Psoas muscle (tissue), 8 donors: ENCODE measurements at regions of chr2 and their contacts with region 1.

Region 1: GRCh38 chr2:61538200-61538919 is at the start of gene XPO1:
- DNase-seq: peak; percentile 99 to 100
- ATAC-seq: peak; percentile 90 to 94 (median 90)
- H3K4me3 ChIP-seq: peak within 1 kb of the TSS; percentile 87
- H3K27ac ChIP-seq: peak within 1 kb of the TSS; percentile 97
- H3K4me1 ChIP-seq: peaks cover 24% of the 10 kb centered on the region
- H3K27me3 ChIP-seq: no peaks in the 10 kb centered on the region
- CTCF ChIP-seq: no peak
- total RNA-seq, gene XPO1: 57.9 to 108 (median 63.1) TPM

Region 2: GRCh38 chr2:61343141-61343540 is 195.2 kb before region 1 on chr2:
- intact Hi-C with region 1: no loop called
- DNase-seq: no peak
- ATAC-seq: no peak
- H3K4me3 ChIP-seq: no peak overlapping the region
- H3K27ac ChIP-seq: no peak overlapping the region
- H3K4me1 ChIP-seq: no peaks in the 10 kb centered on the region
- H3K27me3 ChIP-seq: no peaks in the 10 kb centered on the region
- CTCF ChIP-seq: no peak

Region 3: DNA sequence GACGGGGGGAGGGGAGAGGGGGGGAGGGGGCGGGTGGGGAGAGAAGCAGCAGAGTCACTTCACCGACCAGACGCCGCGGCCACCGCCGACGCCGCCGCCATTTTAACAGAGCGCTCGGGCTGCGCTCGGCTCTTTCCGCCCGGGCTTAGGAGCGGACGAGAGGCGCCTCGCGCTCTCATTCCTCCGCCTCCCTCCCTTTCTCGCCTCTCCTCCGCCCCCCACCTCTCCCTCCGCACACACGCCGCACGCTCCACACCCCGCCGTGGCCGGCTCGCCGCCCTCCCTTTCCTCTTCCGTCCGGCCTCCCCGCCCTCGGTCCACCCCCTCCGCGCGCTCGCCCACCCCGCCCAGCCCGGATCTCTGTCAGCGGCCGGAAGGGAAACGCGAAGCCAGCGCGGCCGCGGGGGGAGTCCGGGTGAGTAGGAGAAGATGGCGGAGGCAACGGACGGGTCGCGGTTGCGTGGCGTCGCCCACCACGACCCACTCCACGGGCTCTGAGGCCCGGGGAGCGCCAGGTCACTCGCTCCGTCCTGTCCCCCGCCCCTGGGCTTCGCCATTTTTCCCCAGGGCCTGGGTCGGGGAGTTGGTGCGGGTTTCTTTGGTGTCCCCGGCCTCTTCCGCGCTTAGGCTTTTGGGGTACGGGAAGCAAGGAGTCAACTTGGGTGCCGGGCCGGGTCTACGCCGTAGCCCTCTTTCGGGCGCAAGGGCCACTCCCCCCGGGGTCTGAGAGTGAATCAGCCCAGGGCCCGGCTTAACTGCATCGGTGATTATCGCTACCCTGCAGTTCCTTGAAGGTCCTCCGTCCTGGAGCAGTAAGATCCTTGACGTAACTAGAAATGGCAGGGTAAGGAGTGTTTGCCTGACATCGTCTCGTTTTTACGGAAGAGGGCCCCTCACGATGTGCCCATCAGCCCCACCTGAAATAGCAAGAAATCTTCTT is 67.1 kb before region 1 on chr2 and contains the start of gene USP34:
- intact Hi-C with region 1: loop called in 1 of 2 experiments (anchors 5 kb)
- DNase-seq: peak; percentile 96 to 98
- ATAC-seq: peak; percentile 91 to 93 (median 92)
- H3K4me3 ChIP-seq: peak within 1 kb of the TSS; percentile 94
- H3K27ac ChIP-seq: peak within 1 kb of the TSS; percentile 99
- H3K4me1 ChIP-seq: peaks cover 23% of the 10 kb centered on the region
- H3K27me3 ChIP-seq: no peaks in the 10 kb centered on the region
- CTCF ChIP-seq: no peak
- total RNA-seq, gene USP34: 49.8 to 71.5 (median 53.7) TPM

Region 4: DNA sequence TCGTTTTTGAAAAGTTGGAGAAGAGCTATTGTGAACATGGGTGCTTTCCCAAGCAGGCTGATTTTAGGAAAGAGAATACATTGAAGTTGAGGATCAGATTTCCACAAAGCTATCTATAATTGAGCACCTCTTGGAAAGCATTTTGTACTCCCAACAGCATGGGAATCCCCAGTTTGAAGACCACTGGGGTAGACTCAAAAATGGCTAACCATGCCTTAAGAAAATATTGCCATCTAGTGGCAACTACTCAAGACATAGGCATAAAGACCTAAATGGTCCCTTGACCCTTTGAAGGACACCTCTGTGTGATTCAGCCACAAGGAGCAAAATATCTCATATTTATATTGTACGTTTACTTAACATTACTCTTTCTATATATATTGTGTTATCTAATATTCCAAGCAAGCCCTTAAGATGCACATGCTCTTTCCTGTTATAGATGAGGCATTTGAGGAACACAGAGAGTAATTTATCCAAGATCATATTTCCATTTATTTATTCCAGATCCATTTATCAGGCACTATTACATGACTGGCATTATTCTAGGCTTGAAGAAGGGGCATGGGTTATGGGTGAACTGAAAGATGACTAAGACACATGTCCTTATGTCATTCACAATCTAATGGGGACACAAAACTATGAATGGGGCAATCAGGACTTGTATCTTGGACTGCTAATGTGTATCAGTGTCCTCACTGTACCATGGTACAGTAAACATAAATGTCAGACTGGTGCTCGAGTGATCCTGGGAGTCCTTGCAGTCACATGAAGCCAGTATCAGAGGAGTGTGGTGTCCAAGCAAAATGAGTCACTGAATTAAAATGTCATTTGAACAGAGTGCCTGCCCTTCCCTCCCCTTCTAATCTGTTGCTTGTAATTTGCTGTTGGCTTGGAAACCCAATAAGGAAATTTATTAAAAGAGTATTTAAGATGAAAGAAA is 120.8 kb after region 1 on chr2:
- intact Hi-C with region 1: loop called in 1 of 2 experiments (anchors 1 kb)
- DNase-seq: no peak
- ATAC-seq: peak; percentile 88 to 95 (median 91)
- H3K4me3 ChIP-seq: no peak overlapping the region
- H3K27ac ChIP-seq: peak overlapping the region; percentile 91
- H3K4me1 ChIP-seq: peaks cover 25% of the 10 kb centered on the region
- H3K27me3 ChIP-seq: no peaks in the 10 kb centered on the region
- CTCF ChIP-seq: peak; percentile 46

Region 5: GRCh38 chr2:61694312-61695274 is 156.2 kb after region 1 on chr2:
- intact Hi-C with region 1: loop called in 1 of 2 experiments (anchors 2 kb)
- DNase-seq: peak; percentile 94 to 97
- ATAC-seq: peak; percentile 99 to 100 (median 100)
- H3K4me3 ChIP-seq: peak overlapping the region; percentile 88
- H3K27ac ChIP-seq: peak overlapping the region; percentile 90
- H3K4me1 ChIP-seq: peaks cover 10% of the 10 kb centered on the region
- H3K27me3 ChIP-seq: no peaks in the 10 kb centered on the region
- CTCF ChIP-seq: peak; percentile 50

Region 6: DNA sequence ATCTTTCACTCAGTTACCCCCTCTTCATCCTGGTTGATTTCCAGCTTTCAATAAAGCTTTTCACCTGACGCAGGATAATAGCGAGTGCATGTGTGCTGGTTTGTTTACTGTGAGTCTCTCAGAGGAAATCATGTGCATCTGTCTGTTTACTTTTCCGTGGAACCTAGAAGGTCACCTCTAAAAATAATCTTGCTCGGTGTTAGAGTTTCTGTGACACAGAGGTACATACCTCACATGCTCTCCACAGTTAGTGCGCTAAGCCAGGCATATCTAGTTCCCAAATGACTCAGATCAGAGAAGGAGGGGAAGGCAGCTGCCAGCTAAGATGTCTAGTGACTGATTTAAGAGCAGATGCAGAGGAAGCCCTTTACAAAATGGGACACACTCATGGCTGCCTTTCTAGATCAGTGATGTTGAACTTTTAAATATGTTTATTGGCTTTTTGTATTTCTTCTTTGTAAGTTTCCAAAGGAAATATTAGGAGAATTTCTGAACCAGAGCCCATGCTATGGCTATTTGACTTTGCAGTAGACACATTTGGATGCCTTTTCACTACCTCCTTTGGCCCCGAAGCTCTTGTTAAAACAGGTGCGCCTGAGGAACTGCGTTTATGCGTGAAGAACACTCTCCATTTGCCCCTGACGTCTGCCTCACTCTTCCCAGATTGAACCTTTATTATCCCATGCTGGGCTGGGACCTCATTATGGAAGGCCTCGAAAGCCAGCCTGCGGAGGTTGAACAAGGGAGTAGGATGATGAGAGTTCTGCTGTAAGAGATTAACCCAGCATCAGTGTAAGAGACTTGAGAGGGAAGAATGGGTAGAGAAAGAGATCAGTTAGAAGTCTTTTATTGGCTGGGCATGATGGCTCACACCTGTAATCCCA is 169.9 kb after region 1 on chr2:
- intact Hi-C with region 1: loop called in 1 of 2 experiments (anchors 1 kb)
- DNase-seq: no peak
- ATAC-seq: peak; percentile 88 to 90 (median 90)
- H3K4me3 ChIP-seq: no peak overlapping the region
- H3K27ac ChIP-seq: peak overlapping the region; percentile 95
- H3K4me1 ChIP-seq: peaks cover 25% of the 10 kb centered on the region
- H3K27me3 ChIP-seq: no peaks in the 10 kb centered on the region
- CTCF ChIP-seq: no peak

Region 7: GRCh38 chr2:61764035-61764800 is 225.9 kb after region 1 on chr2:
- intact Hi-C with region 1: loop called (anchors 2 to 5 kb)
- DNase-seq: peak; percentile 98 to 99
- ATAC-seq: peak; percentile 97 to 99 (median 98)
- H3K4me3 ChIP-seq: peak overlapping the region; percentile 85
- H3K27ac ChIP-seq: peak overlapping the region; percentile 100
- H3K4me1 ChIP-seq: peaks cover 10% of the 10 kb centered on the region
- H3K27me3 ChIP-seq: no peaks in the 10 kb centered on the region
- CTCF ChIP-seq: no peak

Region 8: DNA sequence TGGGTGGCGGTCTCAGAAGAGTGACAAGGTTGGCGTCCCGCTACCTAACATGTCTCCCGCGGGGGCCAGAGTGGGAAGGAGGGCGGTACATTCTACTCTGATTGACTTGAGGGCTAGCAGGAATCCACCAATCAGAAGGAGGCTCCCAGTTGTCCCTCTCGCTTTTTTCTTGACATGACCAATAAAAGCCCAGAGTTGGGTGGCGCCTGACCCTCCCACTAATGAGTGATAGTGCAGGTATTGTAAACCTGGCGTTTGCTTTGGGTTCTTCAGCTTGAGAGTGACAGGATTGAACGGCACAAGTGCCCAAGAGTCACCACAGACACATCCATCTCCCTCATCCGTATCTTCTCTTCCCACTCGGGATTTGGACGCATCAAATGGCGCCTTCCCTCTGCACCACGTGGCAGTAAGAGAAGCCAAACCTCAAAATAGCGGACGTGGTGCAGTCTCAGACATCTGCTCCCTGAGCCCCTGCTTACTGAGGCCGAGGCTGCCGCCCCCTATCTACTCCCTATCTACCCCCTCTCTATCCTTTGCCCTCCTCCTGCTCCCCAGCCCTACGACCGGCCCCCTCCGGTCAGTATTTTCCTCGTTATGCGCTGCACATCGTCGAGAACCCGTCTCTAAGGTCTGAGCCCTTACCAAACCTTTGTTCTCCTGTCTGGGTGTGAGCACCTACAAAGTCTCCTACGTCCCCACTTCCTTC is 316.3 kb after region 1 on chr2:
- intact Hi-C with region 1: loop called in 1 of 2 experiments (anchors 2 kb)
- DNase-seq: peak; percentile 82 to 90
- ATAC-seq: peak; percentile 95 to 96 (median 95)
- H3K4me3 ChIP-seq: peak overlapping the region; percentile 71
- H3K27ac ChIP-seq: peak overlapping the region; percentile 75
- H3K4me1 ChIP-seq: peaks cover 11% of the 10 kb centered on the region
- H3K27me3 ChIP-seq: no peaks in the 10 kb centered on the region
- CTCF ChIP-seq: no peak

Region 9: DNA sequence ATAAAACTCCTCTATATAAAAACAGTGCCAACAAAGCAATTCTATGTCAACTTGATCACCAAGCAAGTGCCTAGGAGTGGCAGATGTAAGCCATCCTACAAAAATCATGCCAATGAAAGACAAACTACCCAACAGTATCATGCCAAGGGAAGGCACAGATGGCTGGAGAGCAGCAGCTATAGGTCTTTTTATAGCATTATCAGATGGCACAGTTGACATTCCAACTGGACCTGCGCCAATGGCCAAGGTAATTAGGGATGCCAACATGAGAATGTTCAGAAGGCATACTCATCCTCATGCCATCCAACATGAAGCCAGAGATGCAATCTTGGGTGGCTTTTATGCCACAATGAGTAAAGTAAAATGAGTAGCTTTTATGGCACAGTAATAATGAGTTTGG is 1749.6 kb after region 1 on chr2:
- intact Hi-C with region 1: no loop called
- DNase-seq: no peak
- ATAC-seq: no peak
- H3K4me3 ChIP-seq: no peak overlapping the region
- H3K27ac ChIP-seq: no peak overlapping the region
- H3K4me1 ChIP-seq: no peaks in the 10 kb centered on the region
- H3K27me3 ChIP-seq: no peaks in the 10 kb centered on the region
- CTCF ChIP-seq: no peak